Activated CD4-positive, alpha-beta T cell treated with anti-CD3 and anti-CD28 coated beads for 36 hours (primary cell): ENCODE measurements at regions of chr15 and their contacts with region 1.

Region 1: GRCh38 chr15:90419738-90420406 is 31.8 kb downstream of the IQGAP1 start:
- DNase-seq: peak; percentile 61
- ATAC-seq: peak; percentile 95
- H3K4me3 Mint-ChIP-seq: peak overlapping the region; percentile 47
- H3K27ac Mint-ChIP-seq: peak overlapping the region; percentile 93
- H3K4me1 Mint-ChIP-seq: peaks cover 80% of the 10 kb centered on the region
- H3K27me3 Mint-ChIP-seq: no peaks in the 10 kb centered on the region

Region 2: DNA sequence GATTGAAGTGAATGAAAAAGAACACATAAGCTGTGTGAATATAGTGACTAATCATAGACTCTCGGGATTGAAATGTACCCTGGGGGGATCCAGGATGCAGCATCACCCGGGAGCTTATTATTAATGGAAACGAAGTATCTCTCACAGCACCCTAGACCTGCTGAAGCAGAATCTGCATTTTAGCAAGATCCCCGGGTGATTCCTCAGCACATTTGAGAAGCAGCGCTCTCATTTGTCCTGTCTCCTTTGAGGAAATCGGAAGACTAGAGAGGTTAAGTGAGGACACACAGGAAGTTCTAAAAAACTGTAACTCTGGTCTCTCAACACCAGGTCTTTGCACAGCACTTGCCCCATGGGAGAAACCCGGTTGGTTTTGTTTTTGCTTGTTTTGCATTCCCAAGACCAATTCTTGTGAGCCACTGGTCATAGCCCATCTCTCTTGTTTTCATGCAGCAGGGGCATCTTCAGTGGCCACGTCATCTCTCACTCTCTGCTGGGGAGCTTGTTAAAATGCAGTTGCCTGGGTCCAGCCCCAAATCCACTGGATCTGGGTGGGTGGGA is 388.6 kb before region 1 on chr15:
- CTCF ChIA-PET with region 1: no interaction called
- POLR2A ChIA-PET with region 1: no interaction called
- intact Hi-C with region 1: no loop called
- DNase-seq: peak; percentile 54
- ATAC-seq: peak; percentile 59
- H3K4me3 Mint-ChIP-seq: no peak overlapping the region
- H3K27ac Mint-ChIP-seq: peak overlapping the region; percentile 80
- H3K4me1 Mint-ChIP-seq: peaks cover 59% of the 10 kb centered on the region
- H3K27me3 Mint-ChIP-seq: no peaks in the 10 kb centered on the region

Region 3: DNA sequence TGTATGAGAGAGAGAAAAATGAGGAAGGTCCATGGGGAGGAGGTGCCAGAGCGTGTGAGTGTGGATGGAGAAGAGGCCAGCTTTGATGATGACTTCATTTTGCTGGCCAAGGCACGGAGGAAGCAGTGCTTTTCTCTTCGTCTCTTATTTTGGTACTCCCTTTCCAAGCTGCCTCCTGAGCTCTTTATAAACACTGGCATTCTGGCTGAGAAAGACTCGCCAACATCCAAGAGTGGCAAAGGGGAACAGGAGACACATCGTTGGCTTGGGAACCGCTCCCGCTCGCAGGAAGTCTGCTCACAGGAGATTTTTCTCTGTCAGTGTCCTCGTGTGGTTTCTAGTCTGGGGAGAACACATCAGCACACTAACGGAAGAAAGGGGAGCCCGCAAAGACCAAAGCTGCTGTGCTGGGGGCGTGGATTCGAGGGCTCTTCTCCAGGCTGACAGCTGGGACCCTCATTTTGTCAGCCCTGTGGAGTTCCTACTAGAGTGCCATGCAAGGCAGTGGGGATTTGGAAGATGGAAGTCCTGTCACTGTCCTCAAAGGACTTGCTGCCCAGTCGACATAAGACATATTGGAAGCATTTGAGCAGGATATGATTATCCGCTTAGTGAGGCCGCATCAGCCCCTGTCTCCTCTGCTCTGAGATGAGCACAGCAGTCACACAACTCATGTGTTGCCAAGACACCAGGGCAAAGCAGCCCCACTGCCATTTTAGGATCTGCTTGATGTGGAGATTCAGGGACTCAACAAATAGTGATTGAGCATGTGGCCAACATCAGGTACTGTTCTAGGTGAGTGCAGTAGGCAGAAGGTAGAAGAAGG is 226.7 kb before region 1 on chr15:
- CTCF ChIA-PET with region 1: no interaction called
- POLR2A ChIA-PET with region 1: no interaction called
- intact Hi-C with region 1: no loop called
- DNase-seq: no peak
- ATAC-seq: peak; percentile 39
- H3K4me3 Mint-ChIP-seq: no peak overlapping the region
- H3K27ac Mint-ChIP-seq: no peak overlapping the region
- H3K4me1 Mint-ChIP-seq: peaks cover 30% of the 10 kb centered on the region
- H3K27me3 Mint-ChIP-seq: no peaks in the 10 kb centered on the region

Region 4: GRCh38 chr15:90352109-90352893 is 67.6 kb before region 1 on chr15 and contains the start of gene ZNF774:
- CTCF ChIA-PET with region 1: no interaction called
- POLR2A ChIA-PET with region 1: no interaction called
- intact Hi-C with region 1: loop called in 1 of 2 experiments (anchors 5 kb)
- DNase-seq: peak; percentile 94
- ATAC-seq: peak; percentile 99
- H3K4me3 Mint-ChIP-seq: peak within 1 kb of the TSS; percentile 83
- H3K27ac Mint-ChIP-seq: peak within 1 kb of the TSS; percentile 87
- H3K4me1 Mint-ChIP-seq: peaks cover 7% of the 10 kb centered on the region
- H3K27me3 Mint-ChIP-seq: no peaks in the 10 kb centered on the region
- total RNA-seq, gene ZNF774: 1.5 to 2.0 TPM

Region 5: DNA sequence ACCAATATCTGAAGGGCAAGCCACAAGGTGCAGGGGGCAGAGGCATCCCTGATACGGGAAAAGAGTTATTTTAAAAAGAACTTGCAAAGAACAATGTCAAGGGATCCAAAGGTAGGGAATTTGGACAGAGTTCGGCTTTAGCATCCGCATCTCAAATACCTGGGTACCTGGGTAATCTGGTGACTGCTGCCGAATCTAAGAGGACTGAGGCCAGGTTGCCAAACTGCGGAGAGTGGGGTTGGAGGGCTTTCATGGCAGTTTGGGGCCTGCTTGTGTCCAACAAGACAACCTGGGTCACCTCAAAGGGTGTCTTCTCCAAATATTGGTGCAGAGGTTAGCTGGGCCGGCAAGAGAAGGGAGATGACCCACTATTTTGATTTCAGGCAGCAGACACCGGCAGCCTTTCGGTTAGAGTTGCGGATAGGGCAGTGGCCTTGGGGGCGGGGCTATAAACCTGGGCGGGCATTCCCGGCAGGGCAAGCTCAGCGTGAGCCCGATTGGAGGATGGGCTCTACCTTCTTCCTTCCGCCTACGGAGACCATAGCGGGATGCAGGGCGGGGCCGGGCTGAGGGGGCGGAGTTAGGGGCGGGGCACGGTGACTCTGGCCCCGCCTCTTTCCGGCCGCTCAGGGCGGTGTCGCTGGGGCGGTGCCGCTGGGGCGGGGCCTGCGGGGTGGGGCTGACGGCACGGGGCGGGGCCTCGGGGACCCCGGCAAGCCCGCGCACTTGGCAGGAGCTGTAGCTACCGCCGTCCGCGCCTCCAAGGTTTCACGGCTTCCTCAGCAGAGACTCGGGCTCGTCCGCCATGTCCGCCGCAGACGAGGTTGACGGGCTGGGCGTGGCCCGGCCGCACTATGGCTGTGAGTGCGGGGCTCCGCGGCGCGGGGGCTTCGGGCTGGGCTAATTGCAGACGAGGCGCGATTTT is 32.1 kb before region 1 on chr15 and contains the start of gene IQGAP1:
- CTCF ChIA-PET with region 1: interaction called, 5 read pairs
- POLR2A ChIA-PET with region 1: interaction called, 3 read pairs
- intact Hi-C with region 1: loop called (anchors 1 kb)
- DNase-seq: peak; percentile 99
- ATAC-seq: peak; percentile 95
- H3K4me3 Mint-ChIP-seq: peak within 1 kb of the TSS; percentile 87
- H3K27ac Mint-ChIP-seq: peak within 1 kb of the TSS; percentile 90
- H3K4me1 Mint-ChIP-seq: peaks cover 44% of the 10 kb centered on the region
- H3K27me3 Mint-ChIP-seq: no peaks in the 10 kb centered on the region
- total RNA-seq, gene IQGAP1: 181 to 334 TPM

Region 6: GRCh38 chr15:90407871-90408317 is 12.0 kb before region 1 on chr15:
- CTCF ChIA-PET with region 1: interaction called, 3 read pairs
- POLR2A ChIA-PET with region 1: interaction called, 4 read pairs
- intact Hi-C with region 1: loop called (anchors 1 kb)
- DNase-seq: peak; percentile 44
- ATAC-seq: peak; percentile 94
- H3K4me3 Mint-ChIP-seq: peak overlapping the region; percentile 33
- H3K27ac Mint-ChIP-seq: peak overlapping the region; percentile 73
- H3K4me1 Mint-ChIP-seq: peaks cover 80% of the 10 kb centered on the region
- H3K27me3 Mint-ChIP-seq: no peaks in the 10 kb centered on the region

Region 7: GRCh38 chr15:90436952-90437351 is 17.1 kb after region 1 on chr15:
- CTCF ChIA-PET with region 1: no interaction called
- POLR2A ChIA-PET with region 1: no interaction called
- intact Hi-C with region 1: no loop called
- DNase-seq: no peak
- ATAC-seq: no peak
- H3K4me3 Mint-ChIP-seq: no peak overlapping the region
- H3K27ac Mint-ChIP-seq: no peak overlapping the region
- H3K4me1 Mint-ChIP-seq: peaks cover 8% of the 10 kb centered on the region
- H3K27me3 Mint-ChIP-seq: no peaks in the 10 kb centered on the region

Region 8: GRCh38 chr15:90598031-90598577 is 178.2 kb after region 1 on chr15:
- CTCF ChIA-PET with region 1: no interaction called
- POLR2A ChIA-PET with region 1: no interaction called
- intact Hi-C with region 1: loop called in 1 of 2 experiments (anchors 5 kb)
- DNase-seq: peak; percentile 30
- ATAC-seq: peak; percentile 2
- H3K4me3 Mint-ChIP-seq: peak overlapping the region; percentile 27
- H3K27ac Mint-ChIP-seq: peak overlapping the region; percentile 83
- H3K4me1 Mint-ChIP-seq: peaks cover 70% of the 10 kb centered on the region
- H3K27me3 Mint-ChIP-seq: no peaks in the 10 kb centered on the region